ENCODE measurements at regions of chr18 and their contacts with region 1.

Region 1: DNA sequence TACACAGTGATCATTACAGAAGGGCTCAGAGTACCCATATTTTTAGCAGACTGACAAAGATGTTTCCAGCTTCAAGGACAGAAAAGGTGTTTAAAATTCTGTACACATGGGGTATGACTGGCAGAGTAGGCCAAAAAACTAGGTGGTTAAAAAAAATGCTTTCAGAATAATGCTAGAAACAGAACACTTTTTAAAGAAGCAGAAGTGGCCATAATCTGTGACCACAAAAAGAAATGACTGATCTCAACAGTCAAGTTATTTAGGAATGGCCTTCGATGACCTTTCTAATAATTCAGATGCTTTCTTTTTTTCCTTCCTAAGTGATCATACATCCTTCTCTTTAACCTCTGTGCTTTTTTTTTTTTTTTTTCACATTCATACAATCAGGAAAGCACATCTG is 4.1 kb upstream of the AQP4 start:
- DNase-seq: no peak
- ATAC-seq: no peak
- H3K4me3 ChIP-seq: no peak overlapping the region
- H3K4me3 Mint-ChIP-seq: no peak overlapping the region
- H3K27ac ChIP-seq: no peak overlapping the region
- H3K27ac Mint-ChIP-seq: no peak overlapping the region
- H3K4me1 ChIP-seq: no peaks in the 10 kb centered on the region
- H3K4me1 Mint-ChIP-seq: no peaks in the 10 kb centered on the region
- H3K27me3 ChIP-seq: peaks cover 0 to 3% of the 10 kb centered on the region in 2 experiments
- H3K27me3 Mint-ChIP-seq: peaks cover 9% of the 10 kb centered on the region
- CTCF ChIP-seq: no peak

Region 2: DNA sequence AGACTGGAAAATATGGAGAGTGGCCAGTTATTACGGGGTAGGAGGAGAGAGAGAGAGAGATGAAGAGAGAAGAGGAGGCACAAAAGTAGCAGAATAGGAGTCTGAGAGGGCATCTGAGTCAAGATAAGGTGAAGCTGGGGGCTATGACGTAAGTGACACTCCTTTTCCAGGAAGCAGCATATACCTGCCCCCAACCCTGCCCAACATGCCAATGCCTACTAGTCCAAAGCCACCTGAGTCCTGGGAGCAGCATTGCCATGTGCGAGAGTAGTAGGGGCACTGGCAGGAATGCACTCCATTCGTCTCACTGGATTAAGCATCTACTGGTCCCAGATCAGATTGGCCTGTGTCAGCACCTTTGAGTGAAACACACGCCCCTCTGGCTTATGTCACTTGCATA is 60.1 kb after region 1 on chr18:
- CTCF ChIA-PET with region 1: no interaction called
- POLR2A ChIA-PET with region 1: no interaction called
- intact Hi-C with region 1: loop called in 1 of 2 experiments (anchors 10 kb)
- DNase-seq: no peak
- ATAC-seq: no peak
- H3K4me3 ChIP-seq: no peak overlapping the region
- H3K4me3 Mint-ChIP-seq: no peak overlapping the region
- H3K27ac ChIP-seq: no peak overlapping the region
- H3K27ac Mint-ChIP-seq: no peak overlapping the region
- H3K4me1 ChIP-seq: no peaks in the 10 kb centered on the region
- H3K4me1 Mint-ChIP-seq: no peaks in the 10 kb centered on the region
- H3K27me3 ChIP-seq: no peaks in the 10 kb centered on the region
- H3K27me3 Mint-ChIP-seq: no peaks in the 10 kb centered on the region
- CTCF ChIP-seq: no peak

Measured in CD4-positive, alpha-beta T cell (primary cell).